ENCODE measurements at regions of chr12 and their contacts with region 1.

Region 1: GRCh38 chr12:54379401-54380201 is 4.9 kb downstream of the ZNF385A start:
- DNase-seq: peak; percentile 93
- ATAC-seq: peak; percentile 95
- H3K4me3 Mint-ChIP-seq: peak overlapping the region; percentile 43
- H3K27ac Mint-ChIP-seq: no peak overlapping the region
- H3K4me1 Mint-ChIP-seq: peaks cover 12% of the 10 kb centered on the region
- H3K27me3 Mint-ChIP-seq: no peaks in the 10 kb centered on the region

Region 2: GRCh38 chr12:54154681-54155186 is 224.9 kb before region 1 on chr12:
- CTCF ChIA-PET with region 1: no interaction called
- POLR2A ChIA-PET with region 1: no interaction called
- DNase-seq: no peak
- ATAC-seq: no peak
- H3K4me3 Mint-ChIP-seq: no peak overlapping the region
- H3K27ac Mint-ChIP-seq: no peak overlapping the region
- H3K4me1 Mint-ChIP-seq: no peaks in the 10 kb centered on the region
- H3K27me3 Mint-ChIP-seq: peaks cover 8% of the 10 kb centered on the region

Region 3: GRCh38 chr12:54214553-54215406 is 164.8 kb before region 1 on chr12:
- CTCF ChIA-PET with region 1: interaction called, 30 read pairs
- POLR2A ChIA-PET with region 1: no interaction called
- DNase-seq: peak; percentile 96
- ATAC-seq: peak; percentile 87
- H3K4me3 Mint-ChIP-seq: peak overlapping the region; percentile 69
- H3K27ac Mint-ChIP-seq: peak overlapping the region; percentile 21
- H3K4me1 Mint-ChIP-seq: peaks cover 43% of the 10 kb centered on the region
- H3K27me3 Mint-ChIP-seq: peaks cover 39% of the 10 kb centered on the region

Region 4: DNA sequence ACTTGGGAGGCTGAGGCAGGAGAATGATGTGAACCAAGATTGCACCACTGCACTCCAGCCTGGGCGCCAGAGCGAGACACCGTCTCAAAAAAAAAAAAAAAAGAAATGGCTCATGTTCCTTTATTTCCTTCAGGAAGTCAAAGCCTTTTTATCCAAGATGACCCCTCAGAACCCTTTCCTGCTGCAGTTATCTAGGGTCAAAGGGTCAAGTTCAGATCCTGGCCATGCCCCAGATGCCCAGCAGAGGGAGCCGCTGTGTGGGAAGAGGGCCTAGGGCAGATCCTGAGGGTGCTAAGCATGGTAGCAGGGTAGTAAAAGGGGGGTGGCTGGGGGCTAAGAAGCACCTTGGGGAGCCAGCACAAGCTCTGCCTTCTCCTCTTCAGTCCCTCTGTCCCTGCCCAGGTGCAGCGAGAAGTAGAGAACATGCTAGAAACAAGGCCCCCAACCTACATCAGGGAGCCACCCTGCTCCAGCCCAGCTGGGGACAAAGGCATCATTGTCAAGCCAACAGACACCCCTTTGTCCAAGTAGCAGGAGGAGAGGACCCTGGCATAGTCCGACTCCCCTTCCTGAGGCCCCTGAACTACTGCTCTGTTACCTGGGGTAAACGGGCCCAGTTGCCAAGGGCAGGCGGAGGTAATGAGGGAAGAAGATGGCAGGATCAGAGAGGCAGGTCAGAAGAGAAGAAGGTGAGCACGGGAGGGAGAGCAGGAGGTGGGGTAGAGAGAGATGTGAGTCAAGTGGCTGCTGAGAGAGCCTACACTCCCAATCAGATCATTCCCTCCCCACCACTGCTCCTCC is 85.2 kb before region 1 on chr12:
- CTCF ChIA-PET with region 1: interaction called, 75 read pairs
- POLR2A ChIA-PET with region 1: no interaction called
- DNase-seq: peak; percentile 76
- ATAC-seq: peak; percentile 58
- H3K4me3 Mint-ChIP-seq: no peak overlapping the region
- H3K27ac Mint-ChIP-seq: no peak overlapping the region
- H3K4me1 Mint-ChIP-seq: peaks cover 5% of the 10 kb centered on the region
- H3K27me3 Mint-ChIP-seq: peaks cover 18% of the 10 kb centered on the region

Region 5: GRCh38 chr12:54359033-54359761 is 20.4 kb before region 1 on chr12:
- CTCF ChIA-PET with region 1: interaction called, 25 read pairs
- POLR2A ChIA-PET with region 1: interaction called, 3 read pairs
- DNase-seq: peak; percentile 98
- ATAC-seq: peak; percentile 96
- H3K4me3 Mint-ChIP-seq: no peak overlapping the region
- H3K27ac Mint-ChIP-seq: no peak overlapping the region
- H3K4me1 Mint-ChIP-seq: peaks cover 30% of the 10 kb centered on the region
- H3K27me3 Mint-ChIP-seq: no peaks in the 10 kb centered on the region

Region 6: DNA sequence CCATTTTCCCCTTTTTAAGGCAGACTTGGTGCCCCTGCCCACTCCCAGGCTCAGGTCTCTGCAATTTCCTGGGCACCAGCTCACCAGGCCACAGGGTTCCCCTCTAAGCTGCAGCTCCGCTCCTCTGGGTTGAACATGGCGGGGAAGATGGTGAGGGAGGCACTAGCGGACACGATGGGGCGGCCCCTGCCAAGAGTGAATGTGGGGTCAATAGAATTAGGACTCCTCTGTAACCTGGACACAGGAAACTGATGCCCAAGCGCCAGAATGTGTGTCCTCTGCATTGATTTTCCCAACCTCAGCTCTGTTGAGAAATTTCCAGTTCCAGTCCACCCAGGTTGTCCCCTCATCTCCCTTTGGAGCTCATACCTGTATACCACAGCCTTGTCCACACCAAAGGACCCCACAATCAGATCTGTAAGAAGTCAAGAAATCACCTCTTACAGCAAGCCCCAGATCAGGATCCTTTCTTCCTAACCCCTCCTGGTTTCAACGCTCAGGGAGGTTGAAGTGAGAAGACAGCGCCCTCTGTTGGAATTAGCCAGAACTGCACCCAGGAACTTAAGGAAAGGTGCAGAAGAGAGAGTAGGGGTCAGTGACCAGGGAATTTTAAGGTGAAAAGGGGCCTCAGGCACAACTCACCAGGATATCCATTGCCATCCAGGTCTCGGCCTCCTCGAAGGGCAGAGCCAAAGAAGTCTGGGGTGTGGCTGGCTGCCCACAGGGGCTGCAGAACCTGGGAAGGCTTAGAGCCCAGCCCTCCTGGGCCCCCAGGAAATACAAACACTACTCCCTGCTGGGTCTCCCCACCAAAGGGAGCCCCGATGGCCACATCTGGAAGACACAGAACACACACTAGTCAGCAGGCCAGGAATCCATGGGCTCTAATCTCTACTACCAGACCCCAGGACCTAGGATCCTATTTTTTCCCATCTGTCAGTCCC is 24.7 kb after region 1 on chr12:
- CTCF ChIA-PET with region 1: interaction called, 50 read pairs
- POLR2A ChIA-PET with region 1: interaction called, 3 read pairs
- DNase-seq: peak; percentile 73
- ATAC-seq: peak; percentile 58
- H3K4me3 Mint-ChIP-seq: no peak overlapping the region
- H3K27ac Mint-ChIP-seq: peak overlapping the region; percentile 18
- H3K4me1 Mint-ChIP-seq: peaks cover 8% of the 10 kb centered on the region
- H3K27me3 Mint-ChIP-seq: no peaks in the 10 kb centered on the region

Region 7: GRCh38 chr12:54497883-54498282 is 118.3 kb after region 1 on chr12:
- CTCF ChIA-PET with region 1: interaction called, 13 read pairs
- POLR2A ChIA-PET with region 1: no interaction called
- DNase-seq: no peak
- ATAC-seq: no peak
- H3K4me3 Mint-ChIP-seq: peak overlapping the region; percentile 96
- H3K27ac Mint-ChIP-seq: peak overlapping the region; percentile 95
- H3K4me1 Mint-ChIP-seq: peaks cover 43% of the 10 kb centered on the region
- H3K27me3 Mint-ChIP-seq: no peaks in the 10 kb centered on the region